AG04449 (cell line): ENCODE measurements at regions of chr6 and their contacts with region 1.

Region 1: DNA sequence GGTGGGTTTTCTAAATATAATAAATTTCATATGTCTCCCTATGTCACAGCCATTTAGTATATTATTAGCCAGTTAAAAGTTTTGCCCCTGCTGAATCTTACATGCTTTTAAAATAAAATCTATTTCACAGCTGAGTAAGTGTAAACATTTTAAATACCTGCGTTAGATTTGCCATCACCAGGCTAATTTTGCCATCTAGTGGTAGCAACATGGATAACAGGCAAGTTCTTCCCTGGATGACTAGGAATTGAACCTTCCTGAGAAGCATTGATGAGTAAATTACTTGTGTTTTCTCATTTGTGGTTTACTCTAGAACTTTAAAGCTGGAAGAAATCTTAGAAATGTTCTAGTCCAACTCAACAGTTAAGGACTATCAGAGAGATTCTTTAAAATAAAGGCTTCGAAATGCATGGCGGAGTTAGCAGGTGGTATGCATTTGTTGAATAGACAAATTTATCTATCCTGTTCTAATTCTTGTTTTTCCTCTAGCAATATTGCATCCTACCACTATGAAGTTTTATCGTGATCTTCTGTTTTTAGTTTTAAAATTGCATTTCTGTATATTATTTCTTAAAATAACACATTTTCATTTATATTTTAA is 2.6 kb downstream of the PRSS35 start:
- DNase-seq: peak; percentile 7
- H3K4me3 ChIP-seq: no peak overlapping the region
- CTCF ChIP-seq: peak; percentile 68

Region 2: DNA sequence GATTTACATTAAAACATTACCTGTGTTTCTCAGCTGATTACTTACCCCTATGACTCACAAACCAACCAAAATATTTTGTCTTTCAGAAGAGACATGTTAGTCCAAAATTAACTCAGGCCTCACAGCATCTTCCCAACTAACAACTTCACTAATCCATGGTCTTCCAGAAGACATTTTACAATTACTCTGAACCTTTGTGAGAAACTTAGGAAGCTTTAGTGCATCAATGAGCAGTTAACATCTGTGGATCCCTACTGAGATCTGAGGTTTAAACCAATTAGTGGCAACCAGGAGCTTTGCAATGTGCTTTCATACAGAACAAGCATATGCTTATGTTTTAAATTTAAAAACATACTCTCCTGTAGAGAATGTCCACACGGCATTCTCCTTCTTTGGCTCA is 719.0 kb before region 1 on chr6:
- CTCF ChIA-PET with region 1: no interaction called
- POLR2A ChIA-PET with region 1: no interaction called
- DNase-seq: no peak
- H3K4me3 ChIP-seq: no peak overlapping the region
- CTCF ChIP-seq: no peak

Region 3: DNA sequence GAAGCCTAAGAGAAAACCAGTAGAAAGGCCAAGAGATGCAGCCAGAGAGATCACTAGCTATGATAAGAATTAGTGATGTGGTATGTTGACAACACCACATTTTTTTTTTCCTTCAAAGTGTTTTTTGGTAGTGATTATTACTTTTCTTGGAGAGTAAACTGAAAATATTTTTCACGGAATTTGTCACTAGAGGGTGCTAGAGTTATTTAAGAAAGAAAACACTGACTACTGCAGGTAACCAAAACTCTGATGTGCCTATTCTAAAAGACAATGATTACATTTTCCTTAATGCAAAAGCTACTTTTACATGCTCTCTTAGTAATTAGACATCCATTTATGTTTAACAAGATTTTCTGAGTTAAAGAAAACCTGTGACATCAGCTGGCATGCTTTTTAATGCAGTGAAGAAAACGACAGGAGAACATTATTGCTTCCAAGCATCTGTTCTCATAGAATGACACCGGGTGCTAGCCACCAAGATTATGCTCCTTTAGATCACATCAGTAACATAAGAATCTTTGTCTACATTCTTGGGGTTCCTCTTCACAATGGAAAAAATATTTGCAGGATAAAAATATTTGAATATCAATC is 293.0 kb before region 1 on chr6:
- CTCF ChIA-PET with region 1: interaction called, 488 read pairs
- POLR2A ChIA-PET with region 1: no interaction called
- DNase-seq: no peak
- H3K4me3 ChIP-seq: no peak overlapping the region
- CTCF ChIP-seq: peak; percentile 4

Region 4: DNA sequence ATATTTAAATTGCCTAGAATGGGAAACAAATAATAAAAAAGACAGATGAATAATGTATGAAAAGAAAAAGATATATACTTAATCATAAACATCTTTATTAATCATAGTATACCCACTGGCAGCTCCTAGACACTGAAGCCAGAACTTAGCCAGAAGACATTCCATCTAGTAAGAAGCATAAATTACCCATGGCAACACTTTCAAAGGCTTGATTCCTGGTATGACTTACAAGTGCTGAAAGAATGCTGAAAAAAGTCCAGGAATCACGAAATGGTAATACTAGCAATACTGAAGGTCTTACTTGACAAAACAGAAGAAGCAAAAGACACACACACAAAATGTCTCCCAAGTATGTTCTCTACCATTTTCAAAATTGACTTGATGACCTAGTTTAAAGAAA is 283.8 kb before region 1 on chr6:
- CTCF ChIA-PET with region 1: interaction called, 52 read pairs
- POLR2A ChIA-PET with region 1: no interaction called
- DNase-seq: peak; percentile 85
- H3K4me3 ChIP-seq: no peak overlapping the region
- CTCF ChIP-seq: no peak

Region 5: DNA sequence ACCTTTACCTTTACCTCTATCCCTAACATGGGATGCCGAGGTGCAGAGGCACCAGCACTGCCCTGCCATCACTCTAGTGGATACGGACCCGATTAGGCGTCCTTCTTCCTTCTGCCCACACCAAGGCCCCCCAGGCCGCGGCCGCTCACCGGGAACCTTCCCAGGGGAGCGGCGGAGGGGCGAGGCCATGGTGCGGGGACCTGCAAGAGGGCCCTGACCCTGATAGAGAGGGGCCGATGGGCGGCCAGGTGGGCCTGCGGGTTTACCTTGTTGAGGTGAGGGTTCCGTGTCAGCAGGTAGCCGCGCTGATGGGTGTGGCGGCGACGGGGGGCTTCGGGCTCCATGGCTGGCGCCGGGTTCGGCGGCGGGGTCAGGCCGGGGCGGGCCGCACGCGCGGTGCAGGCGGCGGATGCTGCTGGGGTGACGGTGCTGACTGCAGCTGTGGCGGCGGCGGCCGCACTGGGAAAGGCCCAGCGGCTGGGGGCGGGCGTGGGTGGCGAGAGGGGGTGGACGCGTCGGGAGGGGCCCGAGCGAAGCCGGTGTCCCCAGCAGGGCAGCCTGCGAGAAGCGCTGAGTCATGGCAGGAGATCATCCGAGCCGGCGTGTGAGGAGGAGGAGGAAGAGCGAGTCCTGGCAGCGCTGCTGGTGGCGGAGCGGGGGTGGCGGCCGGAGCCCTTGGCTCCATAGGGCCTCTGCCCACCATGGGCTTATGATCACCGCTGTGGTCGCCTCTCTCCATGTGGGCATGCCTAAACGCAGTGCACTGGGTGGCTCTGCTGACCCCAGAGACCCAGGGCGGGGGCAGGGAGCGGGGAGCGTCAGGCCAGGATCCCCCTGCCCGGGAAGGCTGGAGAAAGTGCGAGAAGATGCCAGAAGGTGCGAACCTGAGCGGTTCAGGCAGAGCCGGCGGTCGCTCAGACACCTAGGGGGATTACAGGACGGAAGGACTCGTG is 84.1 kb before region 1 on chr6 and contains the start of gene ME1:
- CTCF ChIA-PET with region 1: interaction called, 305 read pairs
- POLR2A ChIA-PET with region 1: no interaction called
- DNase-seq: peak; percentile 17
- H3K4me3 ChIP-seq: peak within 1 kb of the TSS; percentile 69
- CTCF ChIP-seq: no peak